A673 (cell line): ENCODE measurements at regions of chr5 and their contacts with region 1.

Region 1: DNA sequence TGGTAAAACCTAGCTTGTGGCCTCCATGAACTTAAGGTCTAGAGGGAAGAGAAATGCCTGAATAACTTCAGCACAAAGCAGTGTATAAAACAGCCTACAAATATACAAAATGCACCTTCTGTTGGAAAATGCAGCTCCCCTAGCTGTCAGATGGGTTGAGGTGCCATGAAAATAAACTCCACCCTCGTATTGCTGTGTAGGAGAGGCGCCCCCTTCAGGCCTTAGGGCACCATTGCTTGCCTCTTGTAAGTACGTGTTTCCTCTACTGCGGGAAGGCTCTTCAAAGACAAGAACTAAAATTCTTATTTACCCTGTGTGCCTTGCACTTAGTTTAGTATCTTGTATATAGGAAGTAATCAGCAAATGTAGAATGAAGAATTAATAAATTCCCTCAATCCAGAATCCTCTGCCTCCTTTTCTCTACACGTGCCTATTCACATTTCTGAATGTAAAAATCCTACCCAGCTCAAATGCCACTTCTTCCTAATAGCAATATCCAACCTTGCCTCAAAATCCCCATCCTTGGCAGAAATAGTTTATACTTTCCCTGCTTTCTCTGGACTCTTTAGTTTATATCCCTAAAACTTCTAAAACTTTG is 393.7 kb upstream of the PDE4D start:
- DNase-seq: peak; percentile 91
- H3K4me3 ChIP-seq: no peak overlapping the region
- H3K27ac ChIP-seq: no peak overlapping the region
- H3K4me1 ChIP-seq: no peaks in the 10 kb centered on the region
- H3K27me3 ChIP-seq: peaks cover 58% of the 10 kb centered on the region
- CTCF ChIP-seq: peak; percentile 96

Region 2: DNA sequence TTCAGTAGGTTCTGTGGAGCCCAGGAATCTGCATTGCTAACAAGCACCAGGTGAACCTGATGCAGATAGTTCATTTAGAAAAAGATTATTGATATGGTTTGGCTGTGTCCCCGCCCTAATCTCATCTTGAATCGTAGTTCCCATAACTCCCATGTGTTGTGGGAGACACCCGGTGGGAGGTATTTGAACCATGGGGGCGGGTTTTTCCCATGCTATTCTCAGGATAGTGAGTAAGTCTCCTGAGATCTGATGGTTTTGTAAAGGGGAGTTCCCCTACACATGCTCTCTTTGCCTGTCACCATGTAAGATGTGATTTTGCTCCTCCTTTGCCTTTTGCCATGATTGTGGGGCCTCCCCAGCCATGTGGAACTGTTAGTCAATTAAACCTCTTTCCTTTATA is 1492.4 kb before region 1 on chr5:
- CTCF ChIA-PET with region 1: interaction called, 12 read pairs
- POLR2A ChIA-PET with region 1: no interaction called
- intact Hi-C with region 1: no loop called
- DNase-seq: no peak
- H3K4me3 ChIP-seq: no peak overlapping the region
- H3K27ac ChIP-seq: no peak overlapping the region
- H3K4me1 ChIP-seq: peaks cover 12% of the 10 kb centered on the region
- H3K27me3 ChIP-seq: no peaks in the 10 kb centered on the region
- CTCF ChIP-seq: no peak

Region 3: GRCh38 chr5:59905188-59905587 is 382.1 kb before region 1 on chr5:
- CTCF ChIA-PET with region 1: no interaction called
- POLR2A ChIA-PET with region 1: no interaction called
- intact Hi-C with region 1: loop called (anchors 10 kb)
- DNase-seq: no peak
- H3K4me3 ChIP-seq: no peak overlapping the region
- H3K27ac ChIP-seq: no peak overlapping the region
- H3K4me1 ChIP-seq: no peaks in the 10 kb centered on the region
- H3K27me3 ChIP-seq: peaks cover 91% of the 10 kb centered on the region
- CTCF ChIP-seq: no peak

Region 4: DNA sequence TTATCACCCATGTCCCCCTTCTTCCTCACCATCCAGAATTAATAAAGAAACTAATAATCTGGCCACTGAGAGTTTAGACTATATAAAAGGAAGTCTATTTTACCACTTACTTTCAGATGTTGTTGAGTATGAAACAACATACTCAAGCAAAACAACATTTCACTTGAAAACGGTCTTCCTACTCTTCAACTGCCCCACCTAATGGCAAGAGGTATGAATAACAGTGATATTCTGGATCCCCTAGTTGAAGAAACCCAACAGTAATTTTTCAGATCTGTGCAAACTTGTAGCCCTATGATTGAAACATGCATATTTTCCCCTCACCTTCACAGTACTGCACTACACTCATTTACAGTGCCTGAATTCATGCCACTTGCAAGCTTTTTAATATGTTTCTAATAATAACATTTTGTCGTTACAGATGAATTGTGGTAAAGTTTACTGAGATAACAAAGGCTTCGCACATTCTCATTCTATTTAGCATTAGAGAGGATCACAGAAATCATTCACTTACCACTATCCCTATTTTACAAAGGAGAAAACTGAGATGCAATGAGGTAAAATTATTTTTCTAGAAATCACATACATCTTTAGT is 125.8 kb before region 1 on chr5:
- CTCF ChIA-PET with region 1: no interaction called
- POLR2A ChIA-PET with region 1: no interaction called
- intact Hi-C with region 1: loop called (anchors 5 kb)
- DNase-seq: peak; percentile 59
- H3K4me3 ChIP-seq: no peak overlapping the region
- H3K27ac ChIP-seq: no peak overlapping the region
- H3K4me1 ChIP-seq: no peaks in the 10 kb centered on the region
- H3K27me3 ChIP-seq: peaks cover 28% of the 10 kb centered on the region
- CTCF ChIP-seq: peak; percentile 69

Region 5: DNA sequence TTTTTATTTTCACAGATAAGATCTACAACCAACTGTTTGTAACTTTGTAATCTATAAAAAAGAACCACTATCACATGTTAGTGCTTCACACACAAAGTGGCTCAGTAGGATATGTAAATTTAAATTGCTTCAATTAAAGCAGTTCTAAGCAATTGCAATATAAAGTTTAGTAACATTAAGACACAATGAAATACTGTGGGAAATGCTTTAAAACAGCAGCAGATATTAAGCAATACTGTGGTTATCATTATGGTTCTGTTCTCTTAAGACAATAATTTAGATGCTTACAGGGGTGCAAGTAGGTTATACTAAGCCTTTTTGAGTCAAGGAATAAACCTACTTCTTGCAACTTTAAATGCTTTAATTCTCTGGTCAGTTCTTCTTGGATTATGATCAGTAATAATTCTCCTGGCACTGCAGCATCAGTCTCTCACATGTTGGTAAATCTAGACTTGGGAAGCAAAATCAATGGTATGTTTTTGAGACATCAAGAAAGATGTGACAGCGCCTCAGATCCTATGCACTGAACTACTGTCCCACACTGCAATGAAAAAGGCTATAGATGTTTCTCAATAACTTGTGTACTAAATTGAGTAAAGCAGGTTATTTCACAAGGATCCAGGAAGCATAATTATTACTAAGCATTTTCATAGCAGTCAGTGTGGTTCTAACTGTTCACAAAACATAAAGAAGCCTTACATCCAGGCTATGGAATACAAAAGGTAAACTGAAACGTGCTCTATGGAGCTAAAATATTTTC is 55.1 kb before region 1 on chr5:
- CTCF ChIA-PET with region 1: no interaction called
- POLR2A ChIA-PET with region 1: no interaction called
- intact Hi-C with region 1: no loop called
- DNase-seq: no peak
- H3K4me3 ChIP-seq: no peak overlapping the region
- H3K27ac ChIP-seq: no peak overlapping the region
- H3K4me1 ChIP-seq: no peaks in the 10 kb centered on the region
- H3K27me3 ChIP-seq: peaks cover 38% of the 10 kb centered on the region
- CTCF ChIP-seq: no peak